ENCODE measurements at regions of chr4 and their contacts with region 1.

Region 1: DNA sequence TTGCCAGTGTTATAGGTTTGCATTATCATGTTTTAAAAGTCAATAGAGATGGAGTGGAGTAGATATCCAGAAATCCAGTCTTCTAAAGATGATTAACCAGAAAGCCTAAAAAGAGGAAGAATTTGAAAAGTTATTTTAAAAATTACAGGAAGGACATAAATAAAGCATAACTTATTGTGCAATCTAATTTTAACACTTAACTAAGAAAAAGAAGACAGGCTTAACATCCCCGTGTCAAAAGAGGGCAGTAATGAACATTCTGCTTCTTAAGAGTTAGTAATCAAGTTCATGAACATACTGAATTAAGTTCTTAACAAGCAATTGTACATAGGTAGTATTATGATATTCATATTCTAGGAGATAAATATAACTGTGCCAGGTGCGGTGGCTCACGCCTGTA is 39.3 kb downstream of the ELF2 start:
- DNase-seq: no peak

Region 2: DNA sequence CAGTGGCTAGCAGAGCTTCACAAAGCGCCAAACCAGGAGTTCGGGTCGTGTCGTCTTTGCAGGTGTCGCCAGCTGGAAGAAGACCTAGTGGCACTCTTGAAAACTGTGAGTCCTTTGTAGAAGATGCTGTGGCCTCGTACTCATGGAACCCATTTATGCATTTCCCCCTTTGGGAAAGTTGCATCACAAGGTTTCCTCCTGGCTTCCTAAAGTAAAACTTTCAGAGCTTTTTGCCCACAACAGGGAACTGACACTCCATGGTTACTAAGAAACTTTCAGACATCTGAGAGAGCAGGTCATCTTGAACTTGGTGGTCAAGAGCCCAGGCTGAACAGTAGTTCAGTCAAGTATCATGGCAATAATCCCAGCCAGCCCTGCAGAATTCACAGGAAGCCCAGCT is 138.1 kb before region 1 on chr4:
- CTCF ChIA-PET with region 1: interaction called, 11 read pairs
- POLR2A ChIA-PET with region 1: no interaction called
- DNase-seq: no peak

Region 3: DNA sequence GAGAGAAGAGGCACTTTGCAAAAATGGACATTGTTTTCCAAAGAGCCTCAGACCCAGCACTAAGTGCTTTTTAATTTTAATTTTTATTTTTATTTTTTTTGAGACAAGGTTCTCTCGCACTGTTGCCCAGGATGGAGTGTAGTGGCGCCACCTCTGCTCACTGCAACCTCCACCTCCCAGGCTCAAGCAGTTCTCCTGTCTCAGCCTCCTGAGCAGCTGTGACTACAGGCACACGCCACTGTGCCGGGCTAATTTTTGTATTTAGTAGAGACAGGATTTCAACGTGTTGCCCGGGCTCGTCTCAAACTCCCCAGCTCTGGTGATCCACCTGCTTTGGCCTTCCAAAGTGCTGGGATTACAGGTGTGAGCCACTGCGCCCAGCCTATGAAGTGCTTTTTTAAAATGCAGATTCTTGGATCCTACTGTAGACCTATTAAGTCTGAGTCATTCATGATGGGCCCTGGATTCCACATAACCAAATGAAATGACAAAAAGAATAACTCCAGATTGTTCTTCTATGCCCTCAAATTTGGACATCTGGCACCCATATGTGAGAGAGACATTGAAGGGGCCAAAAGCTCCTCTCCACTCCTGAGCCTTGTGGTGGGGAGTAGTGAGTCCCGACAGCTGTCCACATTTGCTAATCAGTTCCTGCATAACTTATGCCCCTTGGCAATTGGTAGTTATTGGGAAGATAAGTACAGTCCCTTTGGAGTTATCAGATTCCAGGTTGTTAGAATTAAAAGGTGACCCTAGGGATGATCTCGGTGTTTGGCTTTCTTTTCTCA is 118.6 kb before region 1 on chr4:
- CTCF ChIA-PET with region 1: no interaction called
- POLR2A ChIA-PET with region 1: no interaction called
- DNase-seq: no peak

Region 4: GRCh38 chr4:139223682-139224317 is 86.0 kb after region 1 on chr4:
- CTCF ChIA-PET with region 1: no interaction called
- POLR2A ChIA-PET with region 1: no interaction called
- DNase-seq: no peak

Region 5: GRCh38 chr4:139331185-139331584 is 193.4 kb after region 1 on chr4:
- CTCF ChIA-PET with region 1: no interaction called
- POLR2A ChIA-PET with region 1: no interaction called
- DNase-seq: no peak

Region 6: DNA sequence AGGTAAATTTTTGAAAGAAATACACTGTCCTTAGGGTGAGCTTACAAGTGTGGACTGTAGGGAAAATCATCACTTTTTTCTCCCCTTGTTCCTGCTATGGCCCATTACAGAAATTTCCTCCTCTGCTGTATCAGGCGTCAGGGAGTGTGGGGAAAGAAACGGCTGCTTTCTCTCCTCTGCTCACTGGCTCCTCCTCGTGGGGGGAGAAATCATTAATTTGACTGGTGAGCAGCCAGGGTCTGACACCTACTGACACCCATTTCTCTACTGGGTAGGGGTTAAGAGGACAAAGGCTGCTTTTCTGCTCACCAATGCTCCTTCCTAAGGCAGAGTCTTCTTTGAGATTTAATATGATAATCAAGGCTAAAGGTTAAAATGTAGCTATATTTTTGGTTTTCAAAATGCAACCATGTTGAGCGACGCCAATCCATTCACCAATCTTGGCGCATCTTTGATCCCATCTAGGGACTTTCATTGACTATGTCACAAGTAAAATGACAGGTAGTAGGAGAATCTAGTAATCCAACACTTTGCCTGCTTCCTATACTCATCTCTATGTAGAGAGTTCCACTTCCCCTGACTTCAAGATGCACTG is 393.2 kb after region 1 on chr4:
- CTCF ChIA-PET with region 1: no interaction called
- POLR2A ChIA-PET with region 1: no interaction called
- DNase-seq: peak; percentile 79

Measured in HEK293T (cell line).